Caco-2 (cell line): ENCODE measurements at regions of chr2 and their contacts with region 1.

Region 1: GRCh38 chr2:103161456-103162289 is 399.8 kb downstream of the TMEM182 start:
- DNase-seq: peak in 1 of 2 experiments; percentile 54
- H3K4me3 ChIP-seq: no peak overlapping the region
- H3K4me3 Mint-ChIP-seq: no peak overlapping the region
- H3K27ac Mint-ChIP-seq: no peak overlapping the region
- H3K4me1 ChIP-seq: no peaks in the 10 kb centered on the region
- H3K4me1 Mint-ChIP-seq: no peaks in the 10 kb centered on the region
- H3K27me3 ChIP-seq: no peaks in the 10 kb centered on the region
- H3K27me3 Mint-ChIP-seq: peaks cover 3% of the 10 kb centered on the region
- CTCF ChIP-seq: peak; percentile 87 to 91

Region 2: DNA sequence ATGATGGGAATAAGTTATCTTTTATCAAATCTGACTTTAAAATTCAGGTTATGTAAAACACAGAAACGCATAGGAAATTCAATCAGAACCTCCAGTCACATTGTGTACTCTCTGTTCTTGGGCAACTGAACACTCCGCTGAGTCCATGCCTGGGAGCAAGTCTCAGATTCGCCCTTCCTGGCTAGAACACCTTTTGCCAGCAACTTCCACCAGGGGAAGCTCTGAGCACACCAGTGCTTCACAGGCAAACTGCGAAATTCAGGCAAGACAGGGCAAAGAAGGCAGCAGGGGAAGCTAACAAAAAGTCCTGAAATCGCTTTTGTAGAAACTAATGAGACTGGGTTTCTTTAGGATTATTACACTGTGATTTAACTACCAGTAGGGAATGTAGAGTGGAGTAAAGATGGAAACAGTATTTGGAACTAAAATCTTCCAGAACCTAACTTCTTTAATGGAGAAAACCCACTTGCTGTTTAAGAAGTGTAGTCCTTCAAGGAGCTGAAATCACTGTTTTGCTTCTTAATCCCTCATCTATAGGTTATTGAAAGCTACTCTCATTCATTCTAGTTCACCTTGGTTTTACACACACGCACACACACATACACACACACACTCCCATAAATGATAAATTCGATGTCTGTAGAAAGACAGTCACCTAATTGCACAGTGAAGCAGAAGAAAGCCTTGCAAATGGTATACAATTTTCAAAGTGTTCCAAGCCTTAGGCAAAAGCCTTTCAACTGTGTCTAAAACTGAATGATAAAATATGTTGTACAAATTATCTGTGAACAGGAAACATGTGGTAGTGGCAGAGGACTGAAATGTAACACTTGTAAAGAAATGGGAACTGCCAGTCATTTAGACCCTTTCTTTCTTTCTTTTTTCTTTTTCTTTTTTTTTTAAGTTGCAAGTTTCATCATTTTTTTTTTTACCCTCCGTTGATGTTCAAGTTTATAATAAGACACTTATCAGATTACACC is 185.4 kb before region 1 on chr2:
- CTCF ChIA-PET with region 1: interaction called, 3 read pairs
- POLR2A ChIA-PET with region 1: no interaction called
- intact Hi-C with region 1: loop called (anchors 1 kb)
- DNase-seq: peak; percentile 60 to 65
- H3K4me3 ChIP-seq: no peak overlapping the region
- H3K4me3 Mint-ChIP-seq: no peak overlapping the region
- H3K27ac Mint-ChIP-seq: no peak overlapping the region
- H3K4me1 ChIP-seq: no peaks in the 10 kb centered on the region
- H3K4me1 Mint-ChIP-seq: no peaks in the 10 kb centered on the region
- H3K27me3 ChIP-seq: 0 out of 2 replicates have a peak, but pooled peaks cover 2% of the 10 kb centered on the region
- H3K27me3 Mint-ChIP-seq: peaks cover 26% of the 10 kb centered on the region
- CTCF ChIP-seq: peak; percentile 59 to 91

Region 3: GRCh38 chr2:103288708-103289414 is 127.2 kb after region 1 on chr2:
- CTCF ChIA-PET with region 1: no interaction called
- POLR2A ChIA-PET with region 1: no interaction called
- intact Hi-C with region 1: loop called (anchors 2 kb)
- DNase-seq: no peak
- H3K4me3 ChIP-seq: no peak overlapping the region
- H3K4me3 Mint-ChIP-seq: no peak overlapping the region
- H3K27ac Mint-ChIP-seq: no peak overlapping the region
- H3K4me1 ChIP-seq: no peaks in the 10 kb centered on the region
- H3K4me1 Mint-ChIP-seq: no peaks in the 10 kb centered on the region
- H3K27me3 ChIP-seq: no peaks in the 10 kb centered on the region; the same call in 1 of the 2 replicates
- H3K27me3 Mint-ChIP-seq: peaks cover 24% of the 10 kb centered on the region
- CTCF ChIP-seq: peak; percentile 16 to 23

Region 4: GRCh38 chr2:103459291-103459690 is 297.6 kb after region 1 on chr2:
- CTCF ChIA-PET with region 1: interaction called, 3 read pairs
- POLR2A ChIA-PET with region 1: no interaction called
- intact Hi-C with region 1: loop called (anchors 2 kb)
- DNase-seq: no peak
- H3K4me3 ChIP-seq: no peak overlapping the region
- H3K4me3 Mint-ChIP-seq: no peak overlapping the region
- H3K27ac Mint-ChIP-seq: no peak overlapping the region
- H3K4me1 ChIP-seq: no peaks in the 10 kb centered on the region
- H3K4me1 Mint-ChIP-seq: no peaks in the 10 kb centered on the region
- H3K27me3 ChIP-seq: no peaks in the 10 kb centered on the region
- H3K27me3 Mint-ChIP-seq: peaks cover 3% of the 10 kb centered on the region
- CTCF ChIP-seq: peak in 1 of 2 experiments; percentile 28

Region 5: GRCh38 chr2:104872866-104873688 is 1711.4 kb after region 1 on chr2:
- CTCF ChIA-PET with region 1: no interaction called
- POLR2A ChIA-PET with region 1: no interaction called
- intact Hi-C with region 1: loop called (anchors 5 kb)
- DNase-seq: peak; percentile 67 to 70
- H3K4me3 ChIP-seq: peak overlapping the region; percentile 37
- H3K4me3 Mint-ChIP-seq: peak overlapping the region; percentile 54
- H3K27ac Mint-ChIP-seq: no peak overlapping the region
- H3K4me1 ChIP-seq: peaks cover 4% of the 10 kb centered on the region
- H3K4me1 Mint-ChIP-seq: no peaks in the 10 kb centered on the region
- H3K27me3 ChIP-seq: peaks cover 3% of the 10 kb centered on the region
- H3K27me3 Mint-ChIP-seq: peaks cover 20% of the 10 kb centered on the region
- CTCF ChIP-seq: peak; percentile 59 to 65